K562 (cell line): ENCODE measurements at regions of chr2 and their contacts with region 1.

Region 1: DNA sequence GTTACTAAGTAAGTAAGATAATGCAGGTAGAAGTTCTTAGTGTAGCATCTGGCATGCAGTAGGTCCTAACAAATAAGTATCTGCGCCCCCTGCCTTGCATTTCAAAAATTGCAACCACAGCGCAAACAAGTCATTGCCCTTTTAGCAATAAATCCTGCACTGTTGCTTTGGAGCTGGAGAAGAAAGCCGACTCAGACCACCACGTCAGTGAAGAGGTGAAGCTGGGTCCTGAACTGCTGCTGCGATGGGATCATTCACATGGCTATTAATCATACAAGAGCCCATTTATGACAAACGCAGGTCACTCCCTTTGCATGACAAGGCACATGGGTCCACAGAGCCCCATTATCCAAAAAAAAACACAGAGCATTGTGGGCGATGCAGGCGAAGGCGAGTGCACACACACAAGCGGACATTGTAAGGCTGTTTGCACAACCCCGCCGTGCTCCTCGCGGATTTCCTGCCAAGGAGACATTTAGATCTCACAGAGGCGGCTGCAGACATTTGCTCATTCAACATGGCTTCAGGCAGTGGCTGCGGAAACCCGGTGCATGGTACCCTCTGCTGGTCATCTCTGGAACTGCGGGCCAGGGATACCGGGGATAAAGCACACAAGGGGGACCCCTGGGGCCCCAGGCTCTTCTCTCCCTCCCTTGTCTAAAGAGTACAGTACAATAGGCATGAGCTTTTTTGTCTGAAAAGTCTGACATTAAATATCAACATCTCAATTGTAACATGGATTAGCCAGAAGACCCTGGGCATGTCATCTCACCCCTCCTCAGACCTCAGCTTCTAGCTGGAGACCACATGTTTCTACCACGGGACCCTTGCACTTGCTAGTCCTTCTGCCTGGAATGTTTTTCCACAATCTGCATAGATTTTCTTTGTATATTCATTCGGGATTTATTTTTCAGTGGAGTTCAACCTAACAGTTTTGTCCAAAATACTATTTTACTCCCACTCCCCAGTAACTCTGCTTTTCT is 56.7 kb downstream of the CYRIA start:
- DNase-seq: peak; percentile 76 to 86 (median 82)
- ATAC-seq: peak; percentile 96
- H3K4me3 ChIP-seq: peak overlapping the region; percentile 18
- H3K27ac ChIP-seq: no peak overlapping the region
- H3K4me1 ChIP-seq: peaks cover 0 to 4% of the 10 kb centered on the region in 2 experiments; a peak in 2 of 5 replicates
- H3K27me3 ChIP-seq: peaks cover 0 to 11% of the 10 kb centered on the region in 2 experiments; a peak in 1 of 5 replicates
- CTCF ChIP-seq: peak; percentile 91 to 94 (median 94)
- EP300 ChIP-seq: no peak
- POLR2A ChIP-seq: no peak
- RAD21 ChIP-seq: peak; percentile 69 to 80

Region 2: DNA sequence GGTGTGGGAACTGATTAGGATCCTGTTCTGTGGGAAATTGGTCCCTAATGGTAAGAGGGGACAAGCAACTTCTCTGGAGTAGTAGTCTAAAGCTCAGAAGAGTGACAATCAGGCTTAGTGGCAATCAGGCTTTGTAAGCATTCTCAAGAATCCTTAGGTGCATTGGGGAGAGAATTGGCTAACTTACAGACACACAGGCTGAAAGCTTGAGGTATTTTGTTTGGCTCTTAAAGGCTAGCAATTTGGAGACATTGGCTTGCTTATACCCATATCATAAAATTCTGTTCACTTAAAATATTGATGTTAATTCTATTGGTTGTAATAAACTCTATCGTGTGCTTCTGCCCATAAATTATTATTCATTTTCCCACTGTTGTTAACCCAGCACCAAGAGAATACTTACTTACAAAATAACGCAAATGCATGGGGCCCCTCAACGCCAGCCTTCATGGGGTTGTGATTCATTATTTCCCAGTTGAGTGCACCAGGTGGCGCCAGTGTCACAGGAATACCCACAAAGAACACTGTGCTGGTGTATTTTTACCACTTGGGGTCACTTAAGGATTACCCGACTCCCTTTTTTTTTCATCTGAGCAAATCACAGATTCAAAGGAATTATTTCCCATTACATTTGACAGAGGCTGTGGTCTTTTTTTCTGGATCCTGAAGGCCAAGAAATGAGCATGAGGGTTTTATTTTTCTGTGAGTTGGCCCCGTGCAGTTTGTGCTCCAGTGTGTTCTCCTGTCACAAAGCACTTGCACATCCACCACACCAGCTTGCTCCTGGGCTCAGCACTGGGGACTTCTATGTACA is 971.8 kb before region 1 on chr2:
- CTCF ChIA-PET with region 1: interaction called, 16 read pairs
- POLR2A ChIA-PET with region 1: no interaction called
- in situ Hi-C with region 1: no loop called
- intact Hi-C with region 1: loop called (anchors 1 kb)
- DNase-seq: peak; percentile 74 to 83 (median 78)
- ATAC-seq: peak; percentile 97
- H3K4me3 ChIP-seq: no peak overlapping the region
- H3K27ac ChIP-seq: no peak overlapping the region
- H3K4me1 ChIP-seq: no peaks in the 10 kb centered on the region; a peak in 1 of 5 replicates
- H3K27me3 ChIP-seq: no peaks in the 10 kb centered on the region
- CTCF ChIP-seq: peak; percentile 90 to 99 (median 99)
- EP300 ChIP-seq: no peak
- POLR2A ChIP-seq: no peak
- RAD21 ChIP-seq: peak; percentile 90 to 94

Region 3: DNA sequence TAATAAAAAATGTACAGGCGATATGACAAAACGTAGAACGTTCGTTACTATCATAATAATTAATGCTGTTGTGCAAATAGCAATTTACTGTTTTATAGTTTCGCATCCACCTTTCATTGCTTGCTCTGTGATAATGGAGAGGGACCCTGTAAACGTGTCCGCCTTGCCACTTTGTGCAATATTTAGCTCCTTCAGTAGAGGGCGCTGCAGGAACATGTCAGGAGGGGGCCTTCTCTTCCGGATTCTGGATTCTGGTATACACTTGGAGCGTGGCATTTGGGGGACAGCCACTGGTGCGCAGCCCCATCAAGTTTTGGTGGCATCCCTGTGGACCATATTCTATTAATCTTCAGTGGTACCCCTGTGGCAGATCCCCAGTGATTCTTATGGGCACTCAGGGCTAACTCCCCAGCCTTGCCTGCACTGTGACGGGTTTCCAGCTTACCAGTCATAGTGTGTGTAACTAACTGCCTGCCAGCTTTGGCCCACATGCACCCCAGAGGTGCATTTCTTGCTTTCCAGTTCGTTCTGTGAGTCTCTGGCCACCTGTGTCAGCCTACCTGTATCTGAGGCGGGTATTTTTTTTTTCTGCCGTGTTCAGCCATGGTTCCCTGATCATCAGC is 83.6 kb before region 1 on chr2:
- CTCF ChIA-PET with region 1: interaction called, 24 read pairs
- POLR2A ChIA-PET with region 1: no interaction called
- in situ Hi-C with region 1: loop called (anchors 5 kb)
- intact Hi-C with region 1: loop called (anchors 1 kb)
- DNase-seq: peak; percentile 75 to 81 (median 78)
- ATAC-seq: peak; percentile 97
- H3K4me3 ChIP-seq: no peak overlapping the region
- H3K27ac ChIP-seq: no peak overlapping the region
- H3K4me1 ChIP-seq: no peaks in the 10 kb centered on the region
- H3K27me3 ChIP-seq: peaks cover 7 to 18% of the 10 kb centered on the region in 2 experiments; a peak in 3 of 5 replicates
- CTCF ChIP-seq: peak; percentile 81 to 90 (median 84)
- EP300 ChIP-seq: no peak
- POLR2A ChIP-seq: no peak
- RAD21 ChIP-seq: peak; percentile 78 to 82

Region 4: GRCh38 chr2:16568998-16569784 is 39.8 kb before region 1 on chr2:
- CTCF ChIA-PET with region 1: no interaction called
- POLR2A ChIA-PET with region 1: no interaction called
- in situ Hi-C with region 1: no loop called
- intact Hi-C with region 1: loop called (anchors 5 kb)
- DNase-seq: no peak
- ATAC-seq: no peak
- H3K4me3 ChIP-seq: no peak overlapping the region
- H3K27ac ChIP-seq: no peak overlapping the region
- H3K4me1 ChIP-seq: no peaks in the 10 kb centered on the region
- H3K27me3 ChIP-seq: no peaks in the 10 kb centered on the region
- CTCF ChIP-seq: no peak
- EP300 ChIP-seq: no peak
- POLR2A ChIP-seq: no peak
- RAD21 ChIP-seq: no peak

Region 5: DNA sequence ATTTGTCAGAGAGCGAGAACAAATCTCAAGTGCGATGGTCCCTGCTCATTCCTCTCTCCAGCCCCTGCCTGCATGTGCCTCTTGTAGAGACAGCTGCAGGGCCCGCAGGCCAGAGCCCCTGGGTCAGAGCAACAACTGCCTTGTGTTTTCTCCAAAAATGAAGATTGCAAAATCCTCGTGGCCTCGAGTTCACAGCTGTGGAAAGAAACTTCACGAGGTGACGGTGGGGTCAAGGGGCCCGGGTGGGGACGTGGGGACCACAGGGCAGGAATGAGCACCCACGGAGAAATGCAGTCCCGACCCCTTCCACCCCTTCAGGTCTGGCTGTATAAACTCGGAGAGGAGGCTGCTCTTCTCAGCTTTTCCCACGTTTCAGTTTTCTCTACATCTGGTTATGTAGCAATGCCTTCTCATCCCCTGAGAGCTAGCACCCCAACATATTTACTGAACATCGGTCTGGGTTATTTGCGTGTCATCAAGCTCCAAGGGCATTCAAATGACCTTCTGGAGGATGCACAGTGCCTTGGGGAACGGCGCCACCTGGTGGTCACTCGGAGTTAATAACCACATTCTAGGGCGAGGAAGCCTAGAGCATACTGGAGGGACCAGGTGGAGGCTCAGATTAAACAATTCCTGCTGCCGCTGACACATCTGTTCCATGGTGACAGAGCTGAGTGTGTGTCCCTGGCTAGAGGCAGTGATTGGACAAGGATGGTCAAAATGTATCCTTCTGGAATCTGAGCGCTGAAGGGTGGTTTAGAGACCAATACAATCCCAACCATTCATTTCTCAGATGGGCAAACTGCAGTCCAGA is 148.1 kb after region 1 on chr2:
- CTCF ChIA-PET with region 1: interaction called, 65 read pairs
- POLR2A ChIA-PET with region 1: no interaction called
- in situ Hi-C with region 1: no loop called
- intact Hi-C with region 1: loop called (anchors 1 kb)
- DNase-seq: peak; percentile 75 to 82 (median 81)
- ATAC-seq: peak; percentile 98
- H3K4me3 ChIP-seq: no peak overlapping the region
- H3K27ac ChIP-seq: no peak overlapping the region
- H3K4me1 ChIP-seq: peaks cover 0 to 2% of the 10 kb centered on the region in 2 experiments; a peak in 2 of 5 replicates
- H3K27me3 ChIP-seq: peaks cover 7 to 15% of the 10 kb centered on the region in 2 experiments; a peak in 3 of 5 replicates
- CTCF ChIP-seq: peak; percentile 90 to 94 (median 91)
- EP300 ChIP-seq: no peak
- POLR2A ChIP-seq: no peak
- RAD21 ChIP-seq: peak; percentile 99

Region 6: GRCh38 chr2:17309741-17310339 is 700.9 kb after region 1 on chr2:
- CTCF ChIA-PET with region 1: interaction called, 3 read pairs
- POLR2A ChIA-PET with region 1: no interaction called
- in situ Hi-C with region 1: loop called (anchors 25 kb)
- intact Hi-C with region 1: no loop called
- DNase-seq: peak; percentile 54 to 73 (median 66)
- ATAC-seq: peak; percentile 94
- H3K4me3 ChIP-seq: no peak overlapping the region
- H3K27ac ChIP-seq: no peak overlapping the region
- H3K4me1 ChIP-seq: no peaks in the 10 kb centered on the region
- H3K27me3 ChIP-seq: no peaks in the 10 kb centered on the region
- CTCF ChIP-seq: peak; percentile 67 to 77 (median 74)
- EP300 ChIP-seq: no peak
- POLR2A ChIP-seq: no peak
- RAD21 ChIP-seq: peak; percentile 80 to 81